ENCODE measurements at regions of chr9 and their contacts with region 1.

Region 1: DNA sequence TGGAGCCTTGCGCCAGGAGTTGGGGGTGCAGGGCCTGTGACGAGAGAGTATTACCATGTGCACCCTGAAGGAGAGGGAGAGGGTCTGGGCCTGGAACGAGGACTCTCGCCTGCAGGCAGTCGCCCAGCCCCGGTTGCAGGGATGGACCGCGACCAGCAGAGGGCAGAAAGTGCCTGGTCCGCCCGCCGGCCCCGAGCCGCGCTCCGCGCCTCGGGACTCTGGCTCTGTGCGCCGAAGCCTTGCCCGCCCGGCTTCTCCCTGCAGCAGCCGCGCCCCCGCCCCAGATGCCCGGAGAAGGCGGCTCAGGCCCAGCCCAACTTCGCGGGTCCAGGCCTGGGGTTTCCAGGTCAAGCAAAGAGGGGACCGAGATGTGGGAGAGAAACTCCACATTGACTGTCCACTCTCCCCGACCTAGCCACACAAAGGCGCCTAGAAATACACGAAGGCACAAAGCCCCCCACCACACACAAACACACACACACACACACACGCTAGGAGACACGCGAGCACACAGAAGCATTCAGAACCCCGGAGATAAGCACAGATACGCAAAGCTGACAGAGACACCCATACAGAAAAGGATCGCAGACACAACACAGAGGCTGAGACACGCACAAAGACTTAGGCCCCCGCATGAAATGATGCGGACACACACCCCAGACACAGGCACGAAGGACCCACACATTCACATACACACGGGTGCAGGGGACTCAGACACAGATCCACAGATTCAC is 2.0 kb upstream of the LMX1B start:
- DNase-seq: peak; percentile 40 to 78 (median 62)
- ATAC-seq: peak; percentile 73
- H3K4me3 ChIP-seq: no peak overlapping the region
- H3K4me3 Mint-ChIP-seq: peak overlapping the region; percentile 59
- H3K27ac ChIP-seq: no peak overlapping the region
- H3K27ac Mint-ChIP-seq: no peak overlapping the region
- H3K4me1 ChIP-seq: peaks cover 33% of the 10 kb centered on the region
- H3K4me1 Mint-ChIP-seq: peaks cover 12% of the 10 kb centered on the region
- H3K27me3 ChIP-seq: peaks cover 71 to 83% of the 10 kb centered on the region in 2 experiments
- H3K27me3 Mint-ChIP-seq: peaks cover 74% of the 10 kb centered on the region
- CTCF ChIP-seq: peak; percentile 74

Region 2: DNA sequence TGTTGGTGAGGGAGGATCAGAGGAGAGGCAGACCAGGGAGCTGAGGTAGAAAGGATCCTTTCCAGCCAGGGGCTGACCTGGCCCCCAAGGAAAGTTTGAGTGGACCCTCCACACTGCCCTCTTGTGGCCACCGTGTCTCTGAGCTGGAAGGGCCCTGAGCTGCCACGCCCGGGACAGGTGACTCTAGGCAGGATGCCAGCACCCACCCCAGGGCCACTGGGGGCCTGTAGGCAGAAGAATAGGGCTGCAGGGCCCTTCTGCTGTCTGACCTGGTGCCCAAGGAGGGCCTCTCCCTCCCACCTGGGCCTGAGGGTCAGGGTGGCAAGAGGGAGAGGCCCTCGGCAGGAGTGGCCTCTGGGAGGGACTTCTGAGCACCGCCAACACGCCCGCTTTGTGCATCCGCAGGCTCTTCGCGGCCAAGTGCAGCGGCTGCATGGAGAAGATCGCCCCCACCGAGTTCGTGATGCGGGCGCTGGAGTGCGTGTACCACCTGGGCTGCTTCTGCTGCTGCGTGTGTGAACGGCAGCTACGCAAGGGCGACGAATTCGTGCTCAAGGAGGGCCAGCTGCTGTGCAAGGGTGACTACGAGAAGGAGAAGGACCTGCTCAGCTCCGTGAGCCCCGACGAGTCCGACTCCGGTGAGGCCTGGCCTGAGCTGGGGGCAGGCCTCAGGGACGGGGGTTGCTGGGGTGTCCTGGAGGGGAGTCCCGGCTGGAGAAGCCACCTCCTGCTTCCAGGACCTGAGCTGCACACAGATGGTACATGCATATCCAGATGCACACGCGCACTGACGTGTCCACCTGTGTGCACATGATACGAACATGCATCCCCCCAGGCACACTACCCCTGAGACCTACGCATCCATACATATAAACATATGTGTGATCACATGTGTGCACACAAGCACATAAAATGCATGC is 78.9 kb after region 1 on chr9:
- CTCF ChIA-PET with region 1: interaction called, 3 read pairs
- POLR2A ChIA-PET with region 1: no interaction called
- intact Hi-C with region 1: loop called in 1 of 2 experiments (anchors 10 kb)
- DNase-seq: peak; percentile 29 to 69 (median 41)
- ATAC-seq: peak; percentile 69
- H3K4me3 ChIP-seq: no peak overlapping the region
- H3K4me3 Mint-ChIP-seq: no peak overlapping the region
- H3K27ac ChIP-seq: no peak overlapping the region
- H3K27ac Mint-ChIP-seq: no peak overlapping the region
- H3K4me1 ChIP-seq: no peaks in the 10 kb centered on the region
- H3K4me1 Mint-ChIP-seq: no peaks in the 10 kb centered on the region
- H3K27me3 ChIP-seq: peaks cover 23 to 30% of the 10 kb centered on the region in 2 experiments
- H3K27me3 Mint-ChIP-seq: peaks cover 51% of the 10 kb centered on the region
- CTCF ChIP-seq: peak; percentile 64

Region 3: DNA sequence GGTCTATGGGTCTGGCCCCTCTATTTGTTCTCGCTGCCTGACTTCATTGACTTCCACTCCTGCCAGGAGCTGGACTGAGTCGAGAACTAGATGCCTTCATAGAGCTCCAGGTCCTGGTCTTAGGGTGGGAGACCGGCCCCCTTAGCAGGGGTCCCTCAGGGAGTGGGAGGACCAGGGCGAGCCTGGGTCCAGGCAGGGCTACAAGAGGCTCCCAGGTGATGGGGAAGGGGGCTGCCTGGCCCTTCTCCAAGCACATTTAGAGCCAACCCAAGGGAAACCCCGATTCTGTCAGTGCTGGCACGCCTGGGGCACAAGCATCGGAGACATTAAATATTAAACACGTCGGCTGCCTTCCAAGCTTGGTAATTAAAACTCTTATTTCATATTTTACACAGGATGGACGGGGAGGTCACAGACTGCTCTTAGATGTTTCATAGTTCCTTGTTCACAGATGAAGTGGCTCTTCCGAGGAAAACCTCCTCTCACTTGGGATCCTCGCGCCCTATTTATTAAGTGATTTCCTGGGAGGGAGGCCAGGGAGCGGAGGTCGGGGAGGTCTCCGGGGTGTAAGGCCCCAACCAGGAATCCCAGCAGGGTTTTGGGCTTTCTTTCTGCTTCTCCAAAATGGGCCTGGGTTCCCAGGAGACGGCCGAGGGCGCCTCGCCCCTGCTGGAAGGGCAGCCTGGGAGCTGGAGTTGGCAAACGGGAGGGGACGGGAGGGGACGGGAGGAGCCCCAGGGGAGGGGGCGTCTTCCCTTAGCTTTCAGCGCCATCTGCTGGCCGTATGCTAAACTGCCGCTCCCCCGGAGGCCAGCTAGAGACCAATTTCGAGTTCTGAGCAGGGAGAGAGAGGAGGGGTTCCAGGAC is 169.7 kb after region 1 on chr9:
- CTCF ChIA-PET with region 1: no interaction called
- POLR2A ChIA-PET with region 1: no interaction called
- intact Hi-C with region 1: loop called (anchors 1 to 5 kb)
- DNase-seq: peak; percentile 63 to 91 (median 82)
- ATAC-seq: peak; percentile 92
- H3K4me3 ChIP-seq: no peak overlapping the region
- H3K4me3 Mint-ChIP-seq: no peak overlapping the region
- H3K27ac ChIP-seq: no peak overlapping the region
- H3K27ac Mint-ChIP-seq: no peak overlapping the region
- H3K4me1 ChIP-seq: peaks cover 3% of the 10 kb centered on the region
- H3K4me1 Mint-ChIP-seq: no peaks in the 10 kb centered on the region
- H3K27me3 ChIP-seq: peaks cover 8 to 10% of the 10 kb centered on the region in 2 experiments
- H3K27me3 Mint-ChIP-seq: peaks cover 29% of the 10 kb centered on the region
- CTCF ChIP-seq: peak; percentile 98

Region 4: GRCh38 chr9:126819482-126819881 is 207.7 kb after region 1 on chr9:
- CTCF ChIA-PET with region 1: no interaction called
- POLR2A ChIA-PET with region 1: no interaction called
- intact Hi-C with region 1: no loop called
- DNase-seq: no peak
- ATAC-seq: no peak
- H3K4me3 ChIP-seq: no peak overlapping the region
- H3K4me3 Mint-ChIP-seq: no peak overlapping the region
- H3K27ac ChIP-seq: no peak overlapping the region
- H3K27ac Mint-ChIP-seq: no peak overlapping the region
- H3K4me1 ChIP-seq: no peaks in the 10 kb centered on the region
- H3K4me1 Mint-ChIP-seq: peaks cover 40% of the 10 kb centered on the region
- H3K27me3 ChIP-seq: no peaks in the 10 kb centered on the region
- H3K27me3 Mint-ChIP-seq: no peaks in the 10 kb centered on the region
- CTCF ChIP-seq: no peak